PC-3 (cell line): ENCODE measurements at regions of chr9 and their contacts with region 1.

Region 1: GRCh38 chr9:87684627-87685219 is 41.2 kb upstream of the CTSL start:
- DNase-seq: peak; percentile 69
- ATAC-seq: peak; percentile 58
- H3K4me3 ChIP-seq: no peak overlapping the region
- H3K27ac ChIP-seq: no peak overlapping the region
- H3K4me1 ChIP-seq: peaks cover 10% of the 10 kb centered on the region; the same call in 1 of the 2 replicates
- H3K27me3 ChIP-seq: no peaks in the 10 kb centered on the region
- CTCF ChIP-seq: peak; percentile 76

Region 2: GRCh38 chr9:87567001-87567400 is 117.7 kb before region 1 on chr9:
- CTCF ChIA-PET with region 1: no interaction called
- POLR2A ChIA-PET with region 1: no interaction called
- intact Hi-C with region 1: no loop called
- DNase-seq: no peak
- ATAC-seq: no peak
- H3K4me3 ChIP-seq: no peak overlapping the region
- H3K27ac ChIP-seq: no peak overlapping the region
- H3K4me1 ChIP-seq: no peaks in the 10 kb centered on the region
- H3K27me3 ChIP-seq: no peaks in the 10 kb centered on the region; the same call in 1 of the 2 replicates
- CTCF ChIP-seq: no peak

Region 3: DNA sequence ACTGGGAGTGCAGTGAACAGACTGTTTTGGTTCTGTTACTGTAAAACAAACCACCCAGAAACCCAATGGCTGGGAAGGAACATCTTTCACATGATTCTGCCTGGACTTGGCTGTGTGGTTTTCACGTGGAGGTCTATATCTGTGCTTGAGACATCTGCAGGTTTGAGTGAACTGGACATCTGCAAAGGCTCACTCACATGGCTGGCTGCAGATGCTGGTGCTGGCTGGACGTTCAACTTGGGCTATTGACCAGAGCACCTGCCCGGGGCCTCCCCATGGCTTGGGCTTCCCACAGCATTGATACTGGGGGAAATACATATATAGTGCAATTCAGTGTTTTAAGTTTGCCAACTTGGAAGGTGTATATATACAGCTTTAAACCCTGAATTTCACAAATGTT is 48.0 kb after region 1 on chr9:
- CTCF ChIA-PET with region 1: no interaction called
- POLR2A ChIA-PET with region 1: no interaction called
- intact Hi-C with region 1: loop called (anchors 10 kb)
- DNase-seq: no peak
- ATAC-seq: no peak
- H3K4me3 ChIP-seq: no peak overlapping the region
- H3K27ac ChIP-seq: no peak overlapping the region
- H3K4me1 ChIP-seq: no peaks in the 10 kb centered on the region
- H3K27me3 ChIP-seq: no peaks in the 10 kb centered on the region
- CTCF ChIP-seq: no peak

Region 4: DNA sequence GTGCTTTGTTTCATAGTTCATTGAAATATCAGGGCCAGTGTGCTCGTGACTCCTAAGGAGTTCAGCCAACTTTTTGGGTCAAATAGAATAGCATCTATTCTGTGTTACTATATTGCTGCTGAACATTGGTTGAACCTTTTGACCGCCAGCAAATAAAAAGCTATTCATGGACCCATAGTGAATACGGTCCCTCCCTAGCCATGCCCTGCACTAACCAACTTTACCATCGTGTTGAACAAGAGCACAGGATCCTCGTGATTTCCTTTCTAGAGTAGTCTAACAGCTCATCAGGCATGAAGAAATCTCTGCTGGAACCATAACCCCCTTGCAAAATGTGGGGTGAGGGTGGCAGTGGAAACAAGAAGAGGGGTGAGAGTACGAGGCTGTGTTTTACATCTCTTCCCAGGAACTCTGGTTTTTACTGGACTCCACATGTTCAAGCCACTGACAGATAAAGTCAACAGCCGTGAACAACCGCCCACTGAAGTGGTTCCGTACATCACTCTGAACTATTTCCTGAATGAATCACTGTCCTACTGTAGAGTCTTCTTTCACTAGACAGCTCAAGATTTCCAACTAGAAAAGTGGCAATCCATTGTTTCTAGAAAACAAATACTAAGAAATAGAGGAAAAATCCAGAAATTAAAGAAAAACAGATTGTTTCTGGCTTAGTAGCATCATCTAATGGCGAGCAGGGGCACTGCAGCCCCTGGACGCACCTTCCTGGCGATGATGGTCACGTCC is 127.8 kb after region 1 on chr9:
- CTCF ChIA-PET with region 1: no interaction called
- POLR2A ChIA-PET with region 1: no interaction called
- intact Hi-C with region 1: loop called (anchors 1 kb)
- DNase-seq: peak; percentile 49
- ATAC-seq: peak; percentile 48; the same call in 1 of the 2 replicates
- H3K4me3 ChIP-seq: no peak overlapping the region
- H3K27ac ChIP-seq: no peak overlapping the region
- H3K4me1 ChIP-seq: peaks cover 5% of the 10 kb centered on the region; the same call in 1 of the 2 replicates
- H3K27me3 ChIP-seq: no peaks in the 10 kb centered on the region
- CTCF ChIP-seq: peak; percentile 93